ENCODE measurements at regions of chr1 and their contacts with region 1.

Region 1: GRCh38 chr1:32716312-32717148 is 14.0 kb upstream of the SYNC start:
- DNase-seq: no peak
- H3K4me3 ChIP-seq: no peak overlapping the region
- H3K27ac ChIP-seq: no peak overlapping the region
- H3K4me1 ChIP-seq: no peaks in the 10 kb centered on the region
- H3K27me3 ChIP-seq: no peaks in the 10 kb centered on the region
- CTCF ChIP-seq: no peak

Region 2: GRCh38 chr1:32741413-32742198 is 25.1 kb after region 1 on chr1:
- intact Hi-C with region 1: loop called (anchors 2 kb)
- DNase-seq: no peak
- H3K4me3 ChIP-seq: peak overlapping the region; percentile 64 to 99
- H3K27ac ChIP-seq: peak overlapping the region; percentile 93 to 97
- H3K4me1 ChIP-seq: peaks cover 6 to 18% of the 10 kb centered on the region in 2 donors
- H3K27me3 ChIP-seq: no peaks in the 10 kb centered on the region
- CTCF ChIP-seq: peak in 1 of 3 experiments; percentile 50

Region 3: GRCh38 chr1:32773018-32773763 is 56.7 kb after region 1 on chr1:
- intact Hi-C with region 1: loop called (anchors 1 kb)
- DNase-seq: peak; percentile 37 to 90
- H3K4me3 ChIP-seq: no peak overlapping the region
- H3K27ac ChIP-seq: no peak overlapping the region
- H3K4me1 ChIP-seq: no peaks in the 10 kb centered on the region
- H3K27me3 ChIP-seq: no peaks in the 10 kb centered on the region
- CTCF ChIP-seq: peak; percentile 82 to 95 (median 90)

Region 4: GRCh38 chr1:32870615-32871363 is 154.3 kb after region 1 on chr1 and contains the start of gene FNDC5:
- intact Hi-C with region 1: loop called (anchors 1 kb)
- DNase-seq: no peak
- H3K4me3 ChIP-seq: peak within 1 kb of the TSS; percentile 56 to 77
- H3K27ac ChIP-seq: peak within 1 kb of the TSS in 1 of 2 donors; percentile 11
- H3K4me1 ChIP-seq: peaks cover 4 to 24% of the 10 kb centered on the region in 2 donors
- H3K27me3 ChIP-seq: no peaks in the 10 kb centered on the region
- CTCF ChIP-seq: no peak
- total RNA-seq, gene FNDC5: 8.9 TPM

Region 5: GRCh38 chr1:33080885-33081553 is 364.5 kb after region 1 on chr1 and contains the start of gene AZIN2:
- intact Hi-C with region 1: loop called (anchors 10 kb)
- DNase-seq: peak; percentile 84 to 98
- H3K4me3 ChIP-seq: peak within 1 kb of the TSS; percentile 70 to 91
- H3K27ac ChIP-seq: peak within 1 kb of the TSS in 1 of 2 donors; percentile 11
- H3K4me1 ChIP-seq: peaks cover 0 to 14% of the 10 kb centered on the region in 2 donors
- H3K27me3 ChIP-seq: no peaks in the 10 kb centered on the region
- CTCF ChIP-seq: no peak
- total RNA-seq, gene AZIN2: 3.5 TPM

Measured in ascending aorta (tissue), 2 donors.